Natural killer cell (primary cell): ENCODE measurements at regions of chr3 and their contacts with region 1.

Region 1: DNA sequence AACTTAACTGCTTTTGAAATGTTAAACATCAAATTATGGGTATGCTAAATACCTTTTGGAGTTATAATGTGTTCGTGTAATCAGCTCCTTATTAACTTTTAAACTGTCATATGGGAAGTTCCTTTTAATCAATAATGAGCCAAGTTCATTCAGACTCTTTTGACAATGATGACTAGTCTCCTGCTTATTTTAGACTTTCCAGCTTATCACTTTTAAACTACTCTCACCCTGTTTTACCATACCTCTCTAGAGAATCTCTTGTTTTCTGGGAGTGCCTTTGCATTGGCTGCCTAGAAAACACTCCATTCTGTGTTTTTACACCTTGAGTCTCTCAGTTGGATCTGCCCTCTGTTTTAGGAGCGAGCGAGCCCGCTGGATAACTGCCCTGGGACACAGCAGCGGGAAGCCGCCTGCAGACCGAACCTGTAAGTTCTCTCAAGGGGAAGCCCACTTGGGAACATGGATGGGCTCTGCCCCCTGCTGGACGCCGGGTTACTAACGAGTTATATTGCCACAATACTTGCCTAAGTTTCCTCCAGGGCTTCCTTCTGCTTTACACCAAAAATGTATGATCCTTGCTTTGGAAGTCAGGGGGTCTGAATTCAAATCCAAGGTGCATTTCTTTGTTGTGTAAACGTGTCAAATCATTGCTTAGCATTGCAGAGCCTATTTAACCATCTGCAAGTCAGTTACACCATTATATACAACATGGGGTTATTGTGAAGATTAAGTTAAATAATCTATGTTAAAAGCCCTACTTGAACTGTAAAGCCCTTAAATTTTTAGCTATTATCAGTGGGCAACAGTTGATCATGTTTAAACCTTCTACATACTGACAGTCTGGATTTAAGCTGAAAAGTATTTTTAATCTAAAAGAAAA is 71.3 kb downstream of the DHX36 start:
- DNase-seq: peak; percentile 56 to 69
- ATAC-seq: peak; percentile 72 to 82 (median 79)
- H3K4me3 ChIP-seq: no peak overlapping the region
- H3K4me3 Mint-ChIP-seq: no peak overlapping the region
- H3K27ac ChIP-seq: no peak overlapping the region
- H3K27ac Mint-ChIP-seq: peak overlapping the region in 1 of 2 donors; percentile 78
- H3K4me1 ChIP-seq: no peaks in the 10 kb centered on the region
- H3K4me1 Mint-ChIP-seq: peaks cover 9 to 10% of the 10 kb centered on the region in 2 donors
- H3K27me3 ChIP-seq: no peaks in the 10 kb centered on the region
- H3K27me3 Mint-ChIP-seq: no peaks in the 10 kb centered on the region
- CTCF ChIP-seq: peak; percentile 73

Region 2: DNA sequence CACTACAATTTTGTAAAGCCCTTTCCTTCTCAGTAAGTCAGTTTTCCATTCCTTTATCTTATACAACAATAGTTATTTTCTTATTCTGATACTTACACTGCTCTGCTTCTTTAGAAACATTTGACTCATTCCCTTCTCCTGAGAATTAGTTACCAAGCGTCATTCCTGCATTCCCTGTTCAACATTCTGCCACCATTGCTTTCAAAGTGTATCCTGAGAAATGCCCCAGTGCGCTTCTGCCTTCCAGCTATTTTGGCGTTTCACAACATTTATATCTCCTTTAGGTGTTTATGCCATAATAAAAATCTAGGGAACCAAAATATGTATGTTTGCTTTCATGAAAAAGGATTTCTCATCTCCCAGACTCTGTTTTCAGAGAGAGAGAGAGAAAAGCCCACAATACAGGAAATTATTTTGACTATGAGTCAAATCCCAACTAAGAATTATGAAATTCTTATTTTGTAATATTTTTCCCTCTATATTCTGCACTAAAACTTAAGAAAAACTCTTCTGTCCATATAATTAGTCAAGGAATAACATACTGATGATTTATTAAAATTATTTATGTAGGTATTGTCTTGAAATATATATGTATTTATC is 1209.2 kb before region 1 on chr3:
- intact Hi-C with region 1: loop called (anchors 5 kb)
- DNase-seq: no peak
- ATAC-seq: no peak
- H3K4me3 ChIP-seq: no peak overlapping the region
- H3K4me3 Mint-ChIP-seq: no peak overlapping the region
- H3K27ac ChIP-seq: no peak overlapping the region
- H3K27ac Mint-ChIP-seq: no peak overlapping the region
- H3K4me1 ChIP-seq: peaks cover 2% of the 10 kb centered on the region
- H3K4me1 Mint-ChIP-seq: no peaks in the 10 kb centered on the region
- H3K27me3 ChIP-seq: no peaks in the 10 kb centered on the region
- H3K27me3 Mint-ChIP-seq: peaks cover 3 to 16% of the 10 kb centered on the region in 2 donors
- CTCF ChIP-seq: no peak

Region 3: GRCh38 chr3:153574445-153574844 is 678.6 kb before region 1 on chr3:
- intact Hi-C with region 1: no loop called
- DNase-seq: no peak
- ATAC-seq: no peak
- H3K4me3 ChIP-seq: no peak overlapping the region
- H3K4me3 Mint-ChIP-seq: no peak overlapping the region
- H3K27ac ChIP-seq: no peak overlapping the region
- H3K27ac Mint-ChIP-seq: no peak overlapping the region
- H3K4me1 ChIP-seq: no peaks in the 10 kb centered on the region
- H3K4me1 Mint-ChIP-seq: no peaks in the 10 kb centered on the region
- H3K27me3 ChIP-seq: no peaks in the 10 kb centered on the region
- H3K27me3 Mint-ChIP-seq: peaks cover 3 to 12% of the 10 kb centered on the region in 2 donors
- CTCF ChIP-seq: no peak

Region 4: GRCh38 chr3:154214306-154214705 is 38.7 kb before region 1 on chr3:
- intact Hi-C with region 1: no loop called
- DNase-seq: no peak
- ATAC-seq: no peak
- H3K4me3 ChIP-seq: no peak overlapping the region
- H3K4me3 Mint-ChIP-seq: no peak overlapping the region
- H3K27ac ChIP-seq: no peak overlapping the region
- H3K27ac Mint-ChIP-seq: no peak overlapping the region
- H3K4me1 ChIP-seq: no peaks in the 10 kb centered on the region
- H3K4me1 Mint-ChIP-seq: no peaks in the 10 kb centered on the region
- H3K27me3 ChIP-seq: no peaks in the 10 kb centered on the region
- H3K27me3 Mint-ChIP-seq: peaks cover 0 to 4% of the 10 kb centered on the region in 2 donors
- CTCF ChIP-seq: no peak